ENCODE measurements at regions of chr20 and their contacts with region 1.

Region 1: GRCh38 chr20:57493091-57493615 is 31.8 kb downstream of the CTCFL start:
- DNase-seq: no peak
- ATAC-seq: no peak
- H3K4me3 Mint-ChIP-seq: no peak overlapping the region
- H3K27ac Mint-ChIP-seq: no peak overlapping the region
- H3K4me1 Mint-ChIP-seq: peaks cover 6% of the 10 kb centered on the region
- H3K27me3 Mint-ChIP-seq: peaks cover 45% of the 10 kb centered on the region

Region 2: DNA sequence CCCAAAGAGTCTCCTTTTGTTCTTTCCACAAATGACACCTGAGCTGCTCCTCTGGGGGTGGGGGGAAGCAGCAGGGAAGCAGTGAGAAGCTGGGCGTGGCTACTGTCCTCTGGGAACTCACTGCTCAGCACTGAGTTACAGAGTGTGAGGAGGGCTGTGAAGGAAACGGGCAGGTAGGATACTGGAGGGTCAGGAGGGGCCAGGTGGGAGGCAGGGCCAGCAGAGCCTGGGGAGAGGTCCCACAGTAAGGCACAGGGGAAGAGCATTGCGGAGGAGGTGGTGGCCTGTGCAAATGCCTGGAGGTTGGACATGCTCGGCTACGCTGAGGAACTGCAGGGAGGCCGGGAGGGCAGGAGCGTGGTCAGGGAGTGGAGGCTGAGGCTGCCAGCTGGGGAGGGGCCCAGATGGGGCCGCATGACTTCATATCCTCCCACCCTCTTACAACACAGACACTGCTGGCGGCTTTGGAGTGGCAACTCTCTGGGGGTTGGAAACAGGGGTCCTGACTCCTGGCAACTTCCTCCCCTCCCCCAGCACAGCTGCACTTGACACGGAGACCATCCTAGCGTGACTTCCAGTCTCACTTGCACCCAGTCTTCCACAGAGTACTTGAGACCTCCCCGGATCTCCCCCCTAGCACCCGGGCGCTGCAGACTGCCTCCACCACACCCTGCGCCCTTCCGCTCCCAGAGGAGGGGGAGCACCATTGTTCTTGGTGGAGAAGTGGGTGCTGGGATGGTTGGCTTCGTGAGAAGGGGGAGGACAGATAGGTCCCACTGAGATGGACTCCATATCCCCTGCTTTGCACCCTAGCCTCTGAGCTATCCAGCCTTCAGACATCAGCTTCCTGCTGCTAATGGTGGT is 67.8 kb before region 1 on chr20:
- CTCF ChIA-PET with region 1: no interaction called
- POLR2A ChIA-PET with region 1: no interaction called
- DNase-seq: no peak
- ATAC-seq: peak; percentile 42
- H3K4me3 Mint-ChIP-seq: no peak overlapping the region
- H3K27ac Mint-ChIP-seq: peak overlapping the region; percentile 81
- H3K4me1 Mint-ChIP-seq: peaks cover 31% of the 10 kb centered on the region
- H3K27me3 Mint-ChIP-seq: peaks cover 4% of the 10 kb centered on the region

Region 3: GRCh38 chr20:57445298-57445697 is 47.9 kb before region 1 on chr20:
- CTCF ChIA-PET with region 1: no interaction called
- POLR2A ChIA-PET with region 1: no interaction called
- DNase-seq: no peak
- ATAC-seq: no peak
- H3K4me3 Mint-ChIP-seq: no peak overlapping the region
- H3K27ac Mint-ChIP-seq: no peak overlapping the region
- H3K4me1 Mint-ChIP-seq: peaks cover 14% of the 10 kb centered on the region
- H3K27me3 Mint-ChIP-seq: peaks cover 30% of the 10 kb centered on the region

Region 4: GRCh38 chr20:57473246-57474048 is 19.7 kb before region 1 on chr20:
- CTCF ChIA-PET with region 1: interaction called, 11 read pairs
- POLR2A ChIA-PET with region 1: no interaction called
- DNase-seq: peak; percentile 66
- ATAC-seq: peak; percentile 78
- H3K4me3 Mint-ChIP-seq: no peak overlapping the region
- H3K27ac Mint-ChIP-seq: peak overlapping the region; percentile 67
- H3K4me1 Mint-ChIP-seq: peaks cover 34% of the 10 kb centered on the region
- H3K27me3 Mint-ChIP-seq: peaks cover 4% of the 10 kb centered on the region

Measured in activated CD8-positive, alpha-beta T cell treated with anti-CD3 and anti-CD28 coated beads, Interleukin-2, amount 10 ng/mL, durations not matched to agents 7 days and 5 days (primary cell).